ENCODE measurements at regions of chr12 and their contacts with region 1.

Region 1: GRCh38 chr12:120199595-120200306 is 1.2 kb downstream of the RPLP0 start:
- DNase-seq: no peak
- ATAC-seq: no peak
- H3K4me3 Mint-ChIP-seq: peak overlapping the region; percentile 92 to 99 (median 98)
- H3K27ac Mint-ChIP-seq: peak overlapping the region; percentile 92 to 99 (median 98)
- H3K4me1 Mint-ChIP-seq: peaks cover 12 to 51% (median 35%) of the 10 kb centered on the region in 4 donors
- H3K27me3 Mint-ChIP-seq: peaks cover 0 to 2% (median 0%) of the 10 kb centered on the region in 5 donors

Region 2: GRCh38 chr12:119988782-119989668 is 210.7 kb before region 1 on chr12 and contains the start of gene BICDL1:
- POLR2A ChIA-PET with region 1: interaction called, 15 read pairs
- DNase-seq: peak; percentile 92 to 99 (median 98)
- ATAC-seq: peak; percentile 84 to 87
- H3K4me3 Mint-ChIP-seq: peak within 1 kb of the TSS; percentile 79 to 92 (median 88)
- H3K27ac Mint-ChIP-seq: peak within 1 kb of the TSS; percentile 84 to 98 (median 95)
- H3K4me1 Mint-ChIP-seq: peaks cover 11 to 41% (median 32%) of the 10 kb centered on the region in 4 donors
- H3K27me3 Mint-ChIP-seq: peaks cover 0 to 2% (median 0%) of the 10 kb centered on the region in 5 donors
- polyA plus RNA-seq, gene BICDL1: 1.2 to 1.9 (median 1.4) TPM

Region 3: GRCh38 chr12:120228291-120229070 is 28.7 kb after region 1 on chr12:
- POLR2A ChIA-PET with region 1: interaction called, 34 read pairs
- DNase-seq: peak; percentile 78 to 94 (median 86)
- ATAC-seq: peak; percentile 85
- H3K4me3 Mint-ChIP-seq: peak overlapping the region; percentile 56 to 83 (median 74)
- H3K27ac Mint-ChIP-seq: peak overlapping the region; percentile 61 to 91 (median 84)
- H3K4me1 Mint-ChIP-seq: peaks cover 36 to 90% (median 84%) of the 10 kb centered on the region in 4 donors
- H3K27me3 Mint-ChIP-seq: no peaks in the 10 kb centered on the region

Region 4: GRCh38 chr12:120257041-120257821 is 57.5 kb after region 1 on chr12:
- POLR2A ChIA-PET with region 1: interaction called, 76 read pairs
- DNase-seq: no peak
- ATAC-seq: no peak
- H3K4me3 Mint-ChIP-seq: peak overlapping the region in 8 of 10 donors; percentile 5 to 68 (median 43)
- H3K27ac Mint-ChIP-seq: peak overlapping the region; percentile 82 to 94 (median 90)
- H3K4me1 Mint-ChIP-seq: peaks cover 40 to 92% (median 89%) of the 10 kb centered on the region in 4 donors
- H3K27me3 Mint-ChIP-seq: no peaks in the 10 kb centered on the region

Region 5: DNA sequence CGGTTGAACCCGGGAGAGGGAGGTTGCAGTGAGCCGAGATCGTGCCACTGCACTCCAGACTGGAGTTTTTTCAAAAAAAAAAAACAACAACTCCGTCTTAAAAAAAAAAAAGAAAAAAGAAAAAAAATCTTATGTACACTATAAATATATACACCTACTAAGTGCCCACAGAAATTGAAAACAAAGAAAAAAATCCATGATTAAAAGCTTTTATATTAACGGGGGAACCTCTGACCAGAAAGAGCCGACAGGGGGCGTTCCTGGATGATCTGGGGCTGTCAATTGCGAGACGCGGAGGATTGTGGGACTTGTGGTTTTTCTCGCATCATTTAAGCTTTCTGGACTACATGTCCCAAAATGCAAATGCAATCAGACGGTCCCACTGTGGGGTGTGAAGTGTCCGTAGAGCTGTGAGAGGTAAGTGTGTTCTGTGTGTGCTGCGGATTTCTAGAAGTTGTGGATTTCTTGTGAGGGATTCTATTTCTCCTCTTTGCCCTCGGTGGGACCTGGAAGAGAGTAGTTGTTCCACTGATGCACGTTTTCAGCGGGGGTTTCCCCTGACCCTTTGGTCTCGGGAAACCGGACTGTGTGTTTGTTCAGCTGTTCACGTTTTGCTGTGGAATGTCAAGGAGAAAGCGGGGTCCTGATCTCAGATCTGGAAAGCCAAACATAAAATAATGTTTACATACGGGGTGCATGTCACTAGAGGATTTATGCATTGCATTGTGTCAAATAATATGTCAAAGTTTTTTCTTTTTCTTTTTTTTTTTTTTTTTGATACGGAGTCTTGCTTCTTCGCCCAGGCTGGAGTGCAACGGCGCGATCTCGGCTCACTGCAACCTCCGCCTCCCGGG is 102.4 kb after region 1 on chr12 and contains the start of gene SIRT4:
- POLR2A ChIA-PET with region 1: interaction called, 15 read pairs
- DNase-seq: peak; percentile 76 to 93 (median 87)
- ATAC-seq: peak; percentile 99
- H3K4me3 Mint-ChIP-seq: peak within 1 kb of the TSS; percentile 89 to 99 (median 95)
- H3K27ac Mint-ChIP-seq: peak within 1 kb of the TSS; percentile 36 to 94 (median 89)
- H3K4me1 Mint-ChIP-seq: peaks cover 6 to 20% (median 8%) of the 10 kb centered on the region in 4 donors
- H3K27me3 Mint-ChIP-seq: no peaks in the 10 kb centered on the region
- polyA plus RNA-seq, gene SIRT4: 1.9 to 3.2 (median 2.2) TPM